ENCODE measurements at regions of chr7 and their contacts with region 1.

Region 1: DNA sequence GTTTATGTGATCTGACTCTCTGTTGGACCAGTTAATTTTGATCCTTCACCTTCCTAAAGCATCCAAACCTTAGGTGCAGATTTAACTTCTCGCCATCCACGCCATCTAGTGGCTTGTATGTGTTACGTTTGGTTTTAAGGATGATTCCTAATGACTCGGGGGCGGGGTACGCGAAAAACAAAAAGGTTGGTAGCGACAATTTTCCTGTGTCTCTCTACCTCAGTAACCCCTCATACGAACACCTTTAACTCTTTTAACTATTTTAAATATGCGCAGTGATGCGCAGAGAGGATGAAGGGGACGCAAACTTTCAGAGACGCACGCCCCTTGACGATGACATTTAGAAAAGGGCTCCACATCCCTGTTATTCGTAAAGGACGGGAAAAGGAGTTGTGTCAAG is 714 bp upstream of the KCND2 start:
- DNase-seq: peak; percentile 32 to 36
- H3K4me3 ChIP-seq: no peak overlapping the region
- H3K4me3 Mint-ChIP-seq: peak overlapping the region; percentile 75
- H3K27ac Mint-ChIP-seq: no peak overlapping the region
- H3K4me1 ChIP-seq: no peaks in the 10 kb centered on the region
- H3K4me1 Mint-ChIP-seq: peaks cover 8% of the 10 kb centered on the region
- H3K27me3 ChIP-seq: no peaks in the 10 kb centered on the region; the same call in 1 of the 2 replicates
- H3K27me3 Mint-ChIP-seq: peaks cover 27% of the 10 kb centered on the region
- CTCF ChIP-seq: peak; percentile 66 to 71

Region 2: DNA sequence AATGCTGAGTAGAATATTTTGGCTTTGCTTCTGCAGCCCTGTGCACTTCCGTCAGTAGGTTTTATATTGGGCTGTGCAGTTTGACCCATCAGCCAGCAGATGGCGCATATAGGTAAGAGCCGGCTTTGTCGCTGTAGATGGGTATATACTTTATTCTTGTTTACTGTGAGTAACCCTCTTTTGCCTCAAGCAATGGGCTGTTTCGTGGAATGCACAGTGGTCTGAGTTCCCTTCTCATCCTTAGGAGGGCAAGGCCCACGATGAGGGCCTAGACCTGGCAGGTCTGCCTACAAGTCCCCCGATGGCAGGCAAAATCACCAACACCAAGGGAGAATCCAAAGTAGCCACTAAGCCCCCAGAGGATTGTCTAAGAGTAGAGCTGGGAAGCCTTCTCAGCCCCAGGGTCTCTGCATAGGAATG is 1002.2 kb before region 1 on chr7:
- CTCF ChIA-PET with region 1: no interaction called
- POLR2A ChIA-PET with region 1: no interaction called
- intact Hi-C with region 1: loop called (anchors 1 kb)
- DNase-seq: peak; percentile 65 to 66
- H3K4me3 ChIP-seq: no peak overlapping the region
- H3K4me3 Mint-ChIP-seq: no peak overlapping the region
- H3K27ac Mint-ChIP-seq: no peak overlapping the region
- H3K4me1 ChIP-seq: no peaks in the 10 kb centered on the region
- H3K4me1 Mint-ChIP-seq: no peaks in the 10 kb centered on the region
- H3K27me3 ChIP-seq: no peaks in the 10 kb centered on the region
- H3K27me3 Mint-ChIP-seq: peaks cover 4% of the 10 kb centered on the region
- CTCF ChIP-seq: peak; percentile 84 to 89

Region 3: GRCh38 chr7:119935418-119936025 is 336.7 kb before region 1 on chr7:
- CTCF ChIA-PET with region 1: no interaction called
- POLR2A ChIA-PET with region 1: no interaction called
- intact Hi-C with region 1: loop called (anchors 1 kb)
- DNase-seq: peak in 1 of 2 experiments; percentile 5
- H3K4me3 ChIP-seq: no peak overlapping the region
- H3K4me3 Mint-ChIP-seq: no peak overlapping the region
- H3K27ac Mint-ChIP-seq: no peak overlapping the region
- H3K4me1 ChIP-seq: no peaks in the 10 kb centered on the region
- H3K4me1 Mint-ChIP-seq: no peaks in the 10 kb centered on the region
- H3K27me3 ChIP-seq: no peaks in the 10 kb centered on the region
- H3K27me3 Mint-ChIP-seq: no peaks in the 10 kb centered on the region
- CTCF ChIP-seq: peak; percentile 29 to 44

Region 4: DNA sequence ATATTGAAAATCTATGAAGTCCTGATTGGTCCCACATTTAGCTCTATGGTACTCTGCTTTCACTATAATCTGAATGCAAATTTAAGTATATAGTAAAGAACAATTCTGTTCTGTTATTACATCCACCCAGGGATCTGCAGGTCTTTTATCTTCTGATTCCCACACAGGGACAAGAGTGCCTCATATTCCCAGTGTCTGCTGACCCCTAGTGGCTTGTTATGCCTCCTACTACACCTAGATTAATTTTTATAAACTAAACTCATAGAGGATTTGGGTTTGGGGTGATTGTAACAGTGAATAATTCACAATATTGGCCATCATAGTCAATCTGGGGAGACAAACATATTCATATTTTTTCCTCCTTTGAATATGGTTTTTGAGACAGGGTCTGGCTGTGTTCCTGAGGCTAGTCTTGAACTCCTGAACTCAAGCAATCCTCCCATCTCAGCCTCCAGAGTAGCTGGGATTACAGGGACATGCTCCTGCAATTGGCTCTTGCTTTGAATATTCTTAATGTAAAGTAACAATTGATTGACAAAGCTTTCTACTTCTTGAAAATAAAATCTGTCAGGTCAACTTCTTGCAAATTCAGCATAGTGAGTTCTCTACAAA is 282.8 kb after region 1 on chr7:
- CTCF ChIA-PET with region 1: no interaction called
- POLR2A ChIA-PET with region 1: no interaction called
- intact Hi-C with region 1: loop called (anchors 1 kb)
- DNase-seq: peak; percentile 51 to 64
- H3K4me3 ChIP-seq: no peak overlapping the region
- H3K4me3 Mint-ChIP-seq: no peak overlapping the region
- H3K27ac Mint-ChIP-seq: no peak overlapping the region
- H3K4me1 ChIP-seq: no peaks in the 10 kb centered on the region
- H3K4me1 Mint-ChIP-seq: no peaks in the 10 kb centered on the region
- H3K27me3 ChIP-seq: no peaks in the 10 kb centered on the region
- H3K27me3 Mint-ChIP-seq: peaks cover 3% of the 10 kb centered on the region
- CTCF ChIP-seq: peak; percentile 61 to 76

Measured in Caco-2 (cell line).